WTC11 (cell line): ENCODE measurements at regions of chr10 and their contacts with region 1.

Region 1: GRCh38 chr10:72126184-72126871 is 38.0 kb upstream of the SPOCK2 start:
- DNase-seq: no peak
- ATAC-seq: peak; percentile 60; the same call in 1 of the 2 replicates
- H3K4me3 Mint-ChIP-seq: no peak overlapping the region
- H3K27ac Mint-ChIP-seq: peak overlapping the region; percentile 55
- H3K4me1 Mint-ChIP-seq: peaks cover 12% of the 10 kb centered on the region
- H3K27me3 Mint-ChIP-seq: no peaks in the 10 kb centered on the region
- CTCF ChIP-seq: no peak

Region 2: DNA sequence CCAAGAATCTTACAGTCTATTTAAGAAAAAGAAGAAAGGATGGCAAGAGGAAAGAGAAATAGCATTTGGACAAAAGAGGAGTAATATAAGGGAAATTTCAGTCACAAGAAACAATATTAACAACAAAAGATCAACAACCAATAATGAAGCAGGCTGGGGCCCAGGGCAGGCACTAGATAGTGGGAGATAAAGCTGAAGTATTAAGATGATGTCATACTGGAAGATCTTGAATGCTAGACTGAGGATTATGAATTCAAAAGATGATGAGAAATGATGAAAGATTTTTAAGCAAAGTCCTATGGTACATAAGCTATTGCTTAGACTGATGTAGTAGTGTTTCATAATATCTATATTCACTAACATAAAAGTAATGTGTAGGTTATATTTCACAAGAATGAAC is 13.8 kb after region 1 on chr10:
- CTCF ChIA-PET with region 1: interaction called, 20 read pairs
- POLR2A ChIA-PET with region 1: interaction called, 3 read pairs
- DNase-seq: no peak
- ATAC-seq: no peak
- H3K4me3 Mint-ChIP-seq: no peak overlapping the region
- H3K27ac Mint-ChIP-seq: peak overlapping the region; percentile 73
- H3K4me1 Mint-ChIP-seq: peaks cover 17% of the 10 kb centered on the region
- H3K27me3 Mint-ChIP-seq: no peaks in the 10 kb centered on the region
- CTCF ChIP-seq: no peak

Region 3: GRCh38 chr10:72215652-72216549 is 89.6 kb after region 1 on chr10 and contains the starts of genes ANAPC16 and ASCC1:
- CTCF ChIA-PET with region 1: interaction called, 14 read pairs
- POLR2A ChIA-PET with region 1: no interaction called
- DNase-seq: peak; percentile 94
- ATAC-seq: peak; percentile 92
- H3K4me3 Mint-ChIP-seq: peak within 1 kb of the TSS; percentile 97
- H3K27ac Mint-ChIP-seq: peak within 1 kb of the TSS; percentile 100
- H3K4me1 Mint-ChIP-seq: peaks cover 23% of the 10 kb centered on the region
- H3K27me3 Mint-ChIP-seq: no peaks in the 10 kb centered on the region; the same call in 1 of the 2 replicates
- CTCF ChIP-seq: no peak
- total RNA-seq, gene ANAPC16: 52.3 to 72.4 TPM (median 72.3 TPM) in 3 replicates
- total RNA-seq, gene ASCC1: 30.4 to 38.7 TPM (median 32.5 TPM) in 3 replicates

Region 4: DNA sequence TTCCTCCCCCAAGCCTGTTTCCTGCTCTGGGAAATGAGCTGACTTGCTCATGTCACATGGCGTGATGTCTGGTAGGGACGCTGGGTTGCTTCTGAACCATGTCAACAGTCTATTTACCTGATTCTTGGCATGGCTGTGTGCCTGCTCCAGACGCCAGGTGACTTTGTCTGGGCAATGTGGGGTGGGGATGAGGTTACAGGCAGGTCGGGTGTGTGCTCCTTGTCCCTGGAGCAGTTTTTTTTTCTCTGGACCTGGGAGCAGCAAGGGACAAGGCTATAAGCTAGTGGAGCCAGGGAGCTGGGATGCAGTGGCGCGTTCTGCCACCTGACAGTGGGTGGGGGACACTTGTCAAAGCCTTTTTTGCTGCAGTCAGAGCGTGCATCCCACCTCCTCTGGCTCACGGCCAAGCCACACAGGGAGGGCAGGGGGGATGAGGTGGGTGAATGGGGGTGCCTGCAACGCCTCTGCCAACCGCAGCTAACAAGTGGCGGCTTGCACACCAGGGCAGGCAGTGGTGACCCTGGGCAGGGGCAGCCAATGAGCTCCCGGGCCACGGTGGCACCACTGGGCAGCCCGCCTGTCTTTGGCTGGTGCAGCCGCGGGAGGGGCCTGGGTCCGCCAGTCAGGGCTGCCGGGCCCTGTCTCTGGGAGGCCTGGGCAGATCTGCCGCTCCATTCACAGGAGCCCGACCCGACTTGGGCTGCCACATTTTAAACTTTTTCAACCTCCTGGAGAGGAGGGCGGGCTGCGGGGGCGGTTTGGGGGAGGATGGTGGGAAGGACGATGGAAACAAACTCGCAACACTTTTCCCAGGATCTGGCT is 205.5 kb after region 1 on chr10:
- CTCF ChIA-PET with region 1: interaction called, 16 read pairs
- POLR2A ChIA-PET with region 1: no interaction called
- DNase-seq: peak; percentile 81
- ATAC-seq: peak; percentile 88
- H3K4me3 Mint-ChIP-seq: peak overlapping the region; percentile 54
- H3K27ac Mint-ChIP-seq: peak overlapping the region; percentile 92
- H3K4me1 Mint-ChIP-seq: peaks cover 48% of the 10 kb centered on the region
- H3K27me3 Mint-ChIP-seq: no peaks in the 10 kb centered on the region
- CTCF ChIP-seq: no peak

Region 5: GRCh38 chr10:72337020-72337629 is 210.8 kb after region 1 on chr10:
- CTCF ChIA-PET with region 1: interaction called, 14 read pairs
- POLR2A ChIA-PET with region 1: no interaction called
- DNase-seq: peak; percentile 76
- ATAC-seq: peak; percentile 46
- H3K4me3 Mint-ChIP-seq: no peak overlapping the region
- H3K27ac Mint-ChIP-seq: 0 out of 2 replicates have a peak overlapping the region, but pooled peaks have one; percentile 23
- H3K4me1 Mint-ChIP-seq: peaks cover 19% of the 10 kb centered on the region
- H3K27me3 Mint-ChIP-seq: no peaks in the 10 kb centered on the region
- CTCF ChIP-seq: peak; percentile 98